Vagina (tissue), 2 donors: ENCODE measurements at regions of chr7 and their contacts with region 1.

Region 1: DNA sequence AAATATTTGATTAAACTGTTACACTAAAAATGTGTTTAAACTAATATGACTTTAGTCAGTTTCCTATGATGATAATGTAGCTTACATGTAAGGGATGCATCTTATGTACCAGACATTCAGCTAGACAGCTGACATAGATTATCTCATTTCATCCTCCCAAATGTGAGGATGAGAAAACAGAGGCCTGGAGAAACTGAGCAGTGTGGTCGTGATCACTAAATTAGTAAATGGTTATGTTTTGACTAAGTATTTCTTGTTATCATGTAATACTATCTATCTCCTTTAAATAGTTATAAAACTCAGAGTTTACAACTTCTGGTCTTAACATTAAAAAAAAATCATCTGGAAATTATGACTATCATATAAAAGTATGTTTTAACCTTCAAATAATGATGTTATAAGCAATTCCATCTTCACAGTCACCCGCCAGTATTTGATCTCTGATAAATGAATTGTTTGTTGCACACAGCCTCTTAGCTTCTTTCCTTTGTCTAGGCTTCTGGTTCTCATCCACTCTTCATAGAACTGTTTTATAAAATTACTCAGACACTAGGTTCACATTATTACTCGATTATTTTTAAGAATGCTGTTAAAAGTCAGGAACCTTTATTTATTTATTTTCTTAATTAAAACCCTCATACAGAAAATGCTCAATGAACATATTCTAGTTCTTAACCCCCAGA is 33.6 kb upstream of the HDAC9 start:
- DNase-seq: no peak
- H3K4me3 ChIP-seq: no peak overlapping the region
- H3K27ac ChIP-seq: no peak overlapping the region
- H3K4me1 ChIP-seq: no peaks in the 10 kb centered on the region
- H3K27me3 ChIP-seq: no peaks in the 10 kb centered on the region
- CTCF ChIP-seq: no peak
- POLR2A ChIP-seq: no peak

Region 2: DNA sequence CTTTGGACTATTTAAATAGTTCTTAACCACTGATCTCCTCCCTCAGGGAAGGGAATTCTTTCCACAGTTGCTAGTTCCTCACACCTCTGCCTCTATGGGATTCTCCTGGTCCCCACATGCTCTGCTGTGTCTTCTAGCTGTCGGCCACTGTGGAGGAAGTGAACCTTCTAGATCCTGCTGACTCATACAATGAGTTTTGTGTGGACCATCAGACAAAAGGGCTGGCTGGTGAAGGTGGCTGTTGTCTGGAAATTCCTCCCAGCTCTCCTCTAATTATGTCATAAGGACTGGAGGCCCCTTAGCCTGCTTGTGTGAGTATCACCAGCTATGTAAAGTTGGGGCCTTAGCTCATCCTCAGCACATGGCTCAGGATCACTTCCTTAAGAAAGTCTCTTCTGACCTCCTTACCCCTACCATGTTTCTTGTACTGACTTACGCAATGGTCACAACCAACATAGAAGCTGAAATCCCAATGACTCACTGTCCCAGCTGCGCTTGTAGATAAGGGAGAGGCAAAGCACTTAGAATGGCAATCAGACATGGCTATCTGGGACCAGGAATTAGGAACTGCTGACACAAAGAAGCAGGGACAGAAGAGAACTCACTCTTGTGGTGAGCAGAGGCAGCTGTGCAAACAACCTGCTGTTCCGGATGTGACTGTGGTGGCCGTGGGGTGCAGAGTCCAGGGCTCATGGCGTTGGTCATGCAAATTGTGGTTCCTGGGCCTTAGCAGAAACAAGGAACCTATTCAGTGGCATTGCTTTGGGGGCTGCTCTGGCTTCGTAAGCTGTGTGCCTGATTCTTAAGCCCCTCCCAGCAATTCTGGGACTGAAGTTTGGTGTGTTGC is 1757.7 kb after region 1 on chr7:
- intact Hi-C with region 1: loop called (anchors 5 kb)
- DNase-seq: no peak
- H3K4me3 ChIP-seq: no peak overlapping the region
- H3K27ac ChIP-seq: peak overlapping the region; percentile 31
- H3K4me1 ChIP-seq: peaks cover 23% of the 10 kb centered on the region
- H3K27me3 ChIP-seq: no peaks in the 10 kb centered on the region
- CTCF ChIP-seq: no peak
- POLR2A ChIP-seq: no peak